ENCODE measurements at regions of chr6 and their contacts with region 1.

Region 1: GRCh38 chr6:56708810-56709597 is 66.3 kb upstream of the DST start:
- DNase-seq: peak in 3 of 14 experiments; percentile 14 to 32 (median 22)
- ATAC-seq: no peak
- H3K4me3 ChIP-seq: no peak overlapping the region
- H3K4me3 Mint-ChIP-seq: no peak overlapping the region
- H3K27ac ChIP-seq: no peak overlapping the region
- H3K27ac Mint-ChIP-seq: no peak overlapping the region
- H3K4me1 ChIP-seq: no peaks in the 10 kb centered on the region
- H3K4me1 Mint-ChIP-seq: no peaks in the 10 kb centered on the region
- H3K27me3 ChIP-seq: no peaks in the 10 kb centered on the region
- H3K27me3 Mint-ChIP-seq: no peaks in the 10 kb centered on the region
- CTCF ChIP-seq: peak; percentile 58

Region 2: GRCh38 chr6:56359201-56359899 is 349.7 kb before region 1 on chr6:
- CTCF ChIA-PET with region 1: no interaction called
- POLR2A ChIA-PET with region 1: no interaction called
- intact Hi-C with region 1: loop called in 1 of 2 experiments (anchors 5 kb)
- DNase-seq: peak in 13 of 14 experiments; percentile 7 to 73 (median 34)
- ATAC-seq: peak; percentile 68
- H3K4me3 ChIP-seq: no peak overlapping the region
- H3K4me3 Mint-ChIP-seq: no peak overlapping the region
- H3K27ac ChIP-seq: no peak overlapping the region
- H3K27ac Mint-ChIP-seq: no peak overlapping the region
- H3K4me1 ChIP-seq: no peaks in the 10 kb centered on the region
- H3K4me1 Mint-ChIP-seq: no peaks in the 10 kb centered on the region
- H3K27me3 ChIP-seq: no peaks in the 10 kb centered on the region
- H3K27me3 Mint-ChIP-seq: no peaks in the 10 kb centered on the region
- CTCF ChIP-seq: peak; percentile 92

Region 3: GRCh38 chr6:56659721-56660380 is 49.2 kb before region 1 on chr6:
- CTCF ChIA-PET with region 1: no interaction called
- POLR2A ChIA-PET with region 1: no interaction called
- intact Hi-C with region 1: no loop called
- DNase-seq: no peak
- ATAC-seq: no peak
- H3K4me3 ChIP-seq: no peak overlapping the region
- H3K4me3 Mint-ChIP-seq: no peak overlapping the region
- H3K27ac ChIP-seq: no peak overlapping the region
- H3K27ac Mint-ChIP-seq: no peak overlapping the region
- H3K4me1 ChIP-seq: no peaks in the 10 kb centered on the region
- H3K4me1 Mint-ChIP-seq: no peaks in the 10 kb centered on the region
- H3K27me3 ChIP-seq: no peaks in the 10 kb centered on the region
- H3K27me3 Mint-ChIP-seq: no peaks in the 10 kb centered on the region
- CTCF ChIP-seq: no peak

Region 4: GRCh38 chr6:56851541-56852259 is 142.7 kb after region 1 on chr6:
- CTCF ChIA-PET with region 1: no interaction called
- POLR2A ChIA-PET with region 1: no interaction called
- intact Hi-C with region 1: loop called in 1 of 2 experiments (anchors 5 kb)
- DNase-seq: peak in 4 of 14 experiments; percentile 5 to 51 (median 47)
- ATAC-seq: peak; percentile 60
- H3K4me3 ChIP-seq: peak overlapping the region; percentile 20
- H3K4me3 Mint-ChIP-seq: peak overlapping the region; percentile 67
- H3K27ac ChIP-seq: no peak overlapping the region
- H3K27ac Mint-ChIP-seq: no peak overlapping the region
- H3K4me1 ChIP-seq: peaks cover 13% of the 10 kb centered on the region
- H3K4me1 Mint-ChIP-seq: peaks cover 18% of the 10 kb centered on the region
- H3K27me3 ChIP-seq: peaks cover 20 to 32% of the 10 kb centered on the region in 2 experiments
- H3K27me3 Mint-ChIP-seq: peaks cover 59% of the 10 kb centered on the region
- CTCF ChIP-seq: peak; percentile 45

Region 5: GRCh38 chr6:57021086-57021720 is 312.2 kb after region 1 on chr6:
- CTCF ChIA-PET with region 1: no interaction called
- POLR2A ChIA-PET with region 1: no interaction called
- intact Hi-C with region 1: loop called in 1 of 2 experiments (anchors 5 kb)
- DNase-seq: peak in 3 of 14 experiments; percentile 22 to 38 (median 26)
- ATAC-seq: peak; percentile 44
- H3K4me3 ChIP-seq: no peak overlapping the region
- H3K4me3 Mint-ChIP-seq: no peak overlapping the region
- H3K27ac ChIP-seq: no peak overlapping the region
- H3K27ac Mint-ChIP-seq: no peak overlapping the region
- H3K4me1 ChIP-seq: no peaks in the 10 kb centered on the region
- H3K4me1 Mint-ChIP-seq: no peaks in the 10 kb centered on the region
- H3K27me3 ChIP-seq: no peaks in the 10 kb centered on the region
- H3K27me3 Mint-ChIP-seq: peaks cover 5% of the 10 kb centered on the region
- CTCF ChIP-seq: peak; percentile 62

Measured in CD4-positive, alpha-beta T cell (primary cell).